ENCODE measurements at regions of chr19 and their contacts with region 1.

Region 1: DNA sequence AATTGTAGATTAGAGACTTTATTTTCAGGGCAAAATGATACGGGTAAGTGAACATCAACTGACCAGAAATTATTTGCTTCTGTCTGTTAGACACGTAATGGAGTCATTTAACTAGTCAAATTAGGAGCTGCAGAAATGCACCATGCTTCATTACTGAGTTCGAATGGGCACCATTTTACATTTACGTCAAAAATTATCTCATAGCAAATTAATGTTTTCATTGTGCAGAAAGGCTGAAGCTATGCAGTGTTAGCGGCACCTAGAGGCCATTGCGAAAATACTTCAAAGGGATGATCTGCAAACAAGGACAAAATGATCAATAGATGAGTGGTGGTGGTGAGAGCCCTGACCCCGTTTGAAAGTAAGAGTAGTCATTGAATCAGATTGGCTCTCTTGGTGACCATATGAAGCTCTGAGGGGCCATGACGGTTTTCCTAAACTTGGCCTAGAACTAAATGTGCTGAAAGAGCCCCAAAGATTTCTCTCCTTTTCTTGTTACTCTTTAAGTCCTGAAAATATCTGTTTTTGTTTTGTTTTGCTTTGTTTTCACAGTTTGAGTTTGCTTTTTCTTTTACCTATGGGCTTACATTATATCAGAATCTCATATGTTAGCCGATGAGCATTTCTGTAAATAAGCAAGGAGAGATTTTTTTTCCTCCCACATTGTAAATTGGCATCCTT is 277.9 kb downstream of the ZNF536 start:
- DNase-seq: no peak
- ATAC-seq: peak in 1 of 2 donors; percentile 12
- H3K4me3 ChIP-seq: no peak overlapping the region
- H3K27ac ChIP-seq: no peak overlapping the region
- H3K4me1 ChIP-seq: no peaks in the 10 kb centered on the region
- H3K27me3 ChIP-seq: peaks cover 5 to 21% (median 7%) of the 10 kb centered on the region in 3 donors
- CTCF ChIP-seq: peak in 4 of 5 experiments; percentile 12 to 69 (median 45)
- POLR2A ChIP-seq: no peak

Region 2: GRCh38 chr19:29731331-29731850 is 918.7 kb before region 1 on chr19:
- in situ Hi-C with region 1: loop called in 1 of 4 experiments (anchors 25 kb)
- intact Hi-C with region 1: loop called (anchors 5 kb)
- DNase-seq: no peak
- ATAC-seq: no peak
- H3K4me3 ChIP-seq: no peak overlapping the region
- H3K27ac ChIP-seq: no peak overlapping the region
- H3K4me1 ChIP-seq: no peaks in the 10 kb centered on the region
- H3K27me3 ChIP-seq: no peaks in the 10 kb centered on the region
- CTCF ChIP-seq: no peak
- POLR2A ChIP-seq: no peak

Region 3: DNA sequence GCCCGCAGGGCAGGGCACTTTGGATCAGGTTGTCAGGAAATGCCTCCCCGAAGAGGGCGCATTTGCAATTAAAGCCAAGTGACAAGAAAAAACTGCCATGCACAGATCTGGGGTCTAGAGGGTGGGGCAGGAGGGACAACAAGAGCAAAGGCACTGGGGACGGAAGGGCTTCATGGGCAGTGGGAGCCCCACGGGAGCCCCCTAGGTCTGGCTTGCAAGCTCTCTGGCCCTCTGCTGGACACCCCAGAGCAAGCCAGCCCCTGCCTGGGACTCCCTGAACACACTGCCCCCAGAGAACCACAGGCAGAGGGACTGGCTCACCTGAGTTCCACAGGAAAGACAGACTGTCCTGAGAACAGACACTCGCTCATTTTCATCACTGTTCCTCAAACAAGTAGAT is 904.8 kb before region 1 on chr19:
- in situ Hi-C with region 1: loop called (anchors 25 kb)
- intact Hi-C with region 1: no loop called
- DNase-seq: no peak
- ATAC-seq: no peak
- H3K4me3 ChIP-seq: no peak overlapping the region
- H3K27ac ChIP-seq: no peak overlapping the region
- H3K4me1 ChIP-seq: no peaks in the 10 kb centered on the region
- H3K27me3 ChIP-seq: no peaks in the 10 kb centered on the region
- CTCF ChIP-seq: no peak
- POLR2A ChIP-seq: no peak

Region 4: GRCh38 chr19:29771708-29772414 is 878.2 kb before region 1 on chr19:
- in situ Hi-C with region 1: loop called in 3 of 4 experiments (anchors 25 kb)
- intact Hi-C with region 1: no loop called
- DNase-seq: no peak
- ATAC-seq: peak in 1 of 2 donors; percentile 36
- H3K4me3 ChIP-seq: no peak overlapping the region
- H3K27ac ChIP-seq: no peak overlapping the region
- H3K4me1 ChIP-seq: no peaks in the 10 kb centered on the region
- H3K27me3 ChIP-seq: no peaks in the 10 kb centered on the region
- CTCF ChIP-seq: peak; percentile 23 to 67 (median 44)
- POLR2A ChIP-seq: no peak

Region 5: GRCh38 chr19:30222428-30222873 is 427.6 kb before region 1 on chr19:
- in situ Hi-C with region 1: no loop called
- intact Hi-C with region 1: loop called (anchors 5 kb)
- DNase-seq: no peak
- ATAC-seq: no peak
- H3K4me3 ChIP-seq: no peak overlapping the region
- H3K27ac ChIP-seq: no peak overlapping the region
- H3K4me1 ChIP-seq: peaks cover 5 to 14% of the 10 kb centered on the region in 2 donors
- H3K27me3 ChIP-seq: peaks cover 43 to 51% (median 49%) of the 10 kb centered on the region in 3 donors
- CTCF ChIP-seq: peak in 3 of 5 experiments; percentile 35 to 38 (median 35)
- POLR2A ChIP-seq: no peak

Region 6: DNA sequence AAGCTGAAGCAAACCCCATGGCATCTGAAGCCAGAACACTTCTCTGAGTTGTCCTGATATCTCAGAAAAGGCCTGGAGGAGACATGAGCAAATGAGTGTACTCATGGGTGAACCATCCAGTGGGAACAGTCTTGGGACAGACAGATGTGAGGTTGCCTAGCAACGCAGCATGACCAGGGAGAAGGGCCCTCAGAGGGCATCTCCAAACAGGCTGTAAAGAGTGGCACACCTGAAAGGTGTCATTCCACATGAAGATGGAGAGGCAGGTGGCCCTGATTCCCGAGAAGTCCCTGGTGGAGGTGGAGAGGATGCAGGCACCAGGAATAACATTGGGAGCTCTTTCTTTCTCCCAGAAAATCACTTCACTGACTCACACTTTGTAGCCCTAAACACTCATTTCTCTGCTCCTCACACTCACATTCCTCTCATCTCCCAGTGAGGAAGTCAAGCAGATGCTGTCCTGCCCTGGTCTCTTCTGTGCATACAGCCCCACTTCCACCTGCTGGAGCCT is 786.2 kb after region 1 on chr19:
- in situ Hi-C with region 1: no loop called
- intact Hi-C with region 1: no loop called
- DNase-seq: no peak
- ATAC-seq: no peak
- H3K4me3 ChIP-seq: no peak overlapping the region
- H3K27ac ChIP-seq: no peak overlapping the region
- H3K4me1 ChIP-seq: no peaks in the 10 kb centered on the region
- H3K27me3 ChIP-seq: no peaks in the 10 kb centered on the region
- CTCF ChIP-seq: no peak
- POLR2A ChIP-seq: no peak

Region 7: DNA sequence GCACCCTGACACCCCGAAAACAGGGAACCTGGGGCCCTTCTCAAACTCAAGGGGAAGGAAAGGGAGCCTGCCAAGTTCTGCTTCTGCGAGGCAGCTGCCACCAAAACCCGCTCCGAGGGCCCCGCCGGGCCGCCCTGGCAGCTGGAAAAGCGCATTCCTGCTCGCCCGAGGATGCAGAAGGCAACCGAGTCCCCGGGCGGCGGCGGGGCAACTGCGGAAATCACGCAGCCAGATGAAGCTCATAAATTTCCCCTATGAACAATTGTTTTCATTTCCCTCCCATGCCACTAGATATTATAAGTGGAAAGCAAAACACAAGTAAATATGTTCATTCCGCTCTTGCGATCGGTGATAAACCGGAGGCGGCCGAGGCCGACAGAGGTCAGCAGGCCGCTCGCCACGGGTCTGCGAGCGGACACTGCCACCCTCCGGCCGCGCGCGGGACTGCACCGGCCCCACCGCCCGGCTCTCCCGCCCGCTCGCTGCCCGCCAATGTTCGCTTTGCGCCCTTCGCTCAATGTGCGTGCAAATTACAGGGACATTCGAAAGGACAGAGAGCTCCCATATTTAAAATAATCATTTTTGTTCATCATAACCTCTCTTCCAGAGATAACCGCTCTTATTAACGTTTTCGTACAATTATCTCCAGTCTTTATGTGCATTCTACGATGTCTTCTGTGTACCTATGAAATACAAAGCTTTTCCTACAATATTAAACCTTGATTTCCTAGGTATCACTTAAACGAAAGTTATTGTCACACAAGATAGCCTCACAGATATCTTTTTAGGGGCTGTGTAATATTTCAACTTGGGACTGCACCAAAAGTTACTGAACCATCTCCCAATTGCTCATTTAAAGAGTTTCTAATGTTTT is 1574.5 kb after region 1 on chr19:
- in situ Hi-C with region 1: loop called in 1 of 4 experiments (anchors 25 kb)
- intact Hi-C with region 1: no loop called
- DNase-seq: peak in 1 of 2 donors; percentile 12
- ATAC-seq: peak; percentile 73 to 80
- H3K4me3 ChIP-seq: peak overlapping the region in 2 of 4 donors; percentile 29 to 35
- H3K27ac ChIP-seq: no peak overlapping the region
- H3K4me1 ChIP-seq: no peaks in the 10 kb centered on the region
- H3K27me3 ChIP-seq: no peaks in the 10 kb centered on the region
- CTCF ChIP-seq: peak; percentile 76 to 99 (median 88)
- POLR2A ChIP-seq: no peak